Mammary epithelial cell (primary cell): ENCODE measurements at regions of chr7 and their contacts with region 1.

Region 1: GRCh38 chr7:8295638-8296361 is 33.8 kb upstream of the ICA1 start:
- DNase-seq: peak; percentile 70
- H3K4me3 ChIP-seq: no peak overlapping the region
- H3K27ac ChIP-seq: no peak overlapping the region
- H3K4me1 ChIP-seq: no peaks in the 10 kb centered on the region
- H3K27me3 ChIP-seq: no peaks in the 10 kb centered on the region
- CTCF ChIP-seq: peak; percentile 79 to 81

Region 2: DNA sequence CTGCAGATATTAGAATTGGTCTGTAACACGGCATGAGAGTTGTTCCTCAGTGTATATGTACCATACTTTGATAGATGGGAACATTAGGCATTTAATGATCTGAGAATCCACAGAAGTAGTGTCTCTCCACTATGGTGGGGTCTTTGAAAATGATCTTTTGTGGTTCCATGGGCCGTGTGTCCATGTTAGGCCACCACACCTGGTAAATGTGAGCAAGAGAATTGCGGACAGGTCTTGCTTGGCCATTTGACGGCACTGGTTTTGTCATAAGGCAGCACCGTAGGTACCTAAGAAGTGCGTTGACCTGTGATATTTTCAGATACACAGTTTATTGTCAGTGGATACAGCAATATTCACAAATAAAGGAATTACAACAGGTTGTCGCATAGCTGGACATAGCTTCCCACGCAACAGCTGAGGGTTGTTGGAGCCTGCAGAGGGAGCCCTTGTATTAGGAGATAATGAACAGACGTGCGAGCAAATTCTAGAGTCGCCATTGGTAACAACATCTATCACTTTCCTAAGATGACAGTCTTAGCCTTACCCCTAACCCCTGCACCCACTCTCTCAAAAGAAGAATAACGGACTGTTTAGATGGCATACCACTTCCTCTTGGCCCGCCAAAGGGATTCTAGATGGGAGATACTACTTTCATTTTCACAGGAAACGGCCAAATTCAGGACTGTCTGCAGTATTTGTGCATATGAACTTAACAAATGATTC is 871.5 kb before region 1 on chr7:
- CTCF ChIA-PET with region 1: no interaction called
- dilution Hi-C with region 1: no loop called
- in situ Hi-C with region 1: no loop called
- intact Hi-C with region 1: loop called (anchors 2 kb)
- DNase-seq: peak; percentile 51
- H3K4me3 ChIP-seq: peak overlapping the region; percentile 32 to 51 (median 45)
- H3K27ac ChIP-seq: no peak overlapping the region
- H3K4me1 ChIP-seq: no peaks in the 10 kb centered on the region
- H3K27me3 ChIP-seq: no peaks in the 10 kb centered on the region
- CTCF ChIP-seq: peak; percentile 88

Region 3: GRCh38 chr7:7932580-7932979 is 363.2 kb before region 1 on chr7:
- CTCF ChIA-PET with region 1: interaction called, 10 read pairs
- dilution Hi-C with region 1: no loop called
- in situ Hi-C with region 1: no loop called
- intact Hi-C with region 1: no loop called
- DNase-seq: no peak
- H3K4me3 ChIP-seq: no peak overlapping the region
- H3K27ac ChIP-seq: no peak overlapping the region
- H3K4me1 ChIP-seq: no peaks in the 10 kb centered on the region
- H3K27me3 ChIP-seq: no peaks in the 10 kb centered on the region
- CTCF ChIP-seq: no peak

Region 4: DNA sequence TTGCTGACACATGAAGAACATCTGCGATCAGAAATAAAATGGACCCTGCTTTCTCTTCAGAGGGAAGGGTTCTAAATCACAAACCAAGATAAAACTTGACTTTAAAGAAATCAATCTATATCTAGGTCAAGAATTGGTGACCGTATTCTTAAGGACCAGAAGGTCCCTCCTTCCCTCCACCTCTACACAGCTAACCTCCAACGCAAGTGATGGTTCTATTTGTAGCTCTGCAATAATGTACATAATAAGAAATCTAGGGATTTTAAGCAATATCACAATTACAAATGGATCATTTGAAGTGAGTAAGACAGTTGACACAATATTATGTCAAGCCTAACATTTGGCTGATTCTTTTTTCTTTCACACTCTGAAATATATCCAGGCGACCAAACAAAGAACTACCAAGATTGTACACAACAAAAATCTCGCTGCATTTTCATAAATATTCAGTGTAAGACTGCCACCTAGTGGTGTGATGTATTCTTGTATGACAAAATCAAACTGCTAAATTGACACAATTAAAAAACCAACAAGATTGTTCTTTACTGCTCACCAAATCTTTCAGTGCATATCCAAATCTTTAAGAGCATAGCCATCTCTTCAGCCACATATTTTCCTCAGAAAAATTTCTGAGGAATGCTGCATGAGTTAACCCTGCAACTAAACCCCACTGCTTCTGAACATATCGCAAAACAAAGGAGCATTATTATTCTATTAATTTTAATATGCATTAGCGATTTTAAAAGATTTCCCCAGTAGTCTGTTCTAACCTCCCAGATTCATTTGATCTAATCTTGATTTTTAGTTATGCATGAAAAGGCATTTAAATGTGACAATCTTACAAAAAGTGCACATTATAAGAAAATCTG is 78.4 kb before region 1 on chr7:
- CTCF ChIA-PET with region 1: no interaction called
- dilution Hi-C with region 1: no loop called
- in situ Hi-C with region 1: no loop called
- intact Hi-C with region 1: loop called (anchors 2 kb)
- DNase-seq: peak; percentile 36
- H3K4me3 ChIP-seq: no peak overlapping the region
- H3K27ac ChIP-seq: no peak overlapping the region
- H3K4me1 ChIP-seq: no peaks in the 10 kb centered on the region
- H3K27me3 ChIP-seq: no peaks in the 10 kb centered on the region
- CTCF ChIP-seq: peak; percentile 53

Region 5: GRCh38 chr7:8284606-8285005 is 11.2 kb before region 1 on chr7:
- CTCF ChIA-PET with region 1: no interaction called
- dilution Hi-C with region 1: no loop called
- in situ Hi-C with region 1: no loop called
- intact Hi-C with region 1: no loop called
- DNase-seq: no peak
- H3K4me3 ChIP-seq: no peak overlapping the region
- H3K27ac ChIP-seq: no peak overlapping the region
- H3K4me1 ChIP-seq: no peaks in the 10 kb centered on the region
- H3K27me3 ChIP-seq: peaks cover 2% of the 10 kb centered on the region
- CTCF ChIP-seq: no peak

Region 6: GRCh38 chr7:8320174-8320573 is 24.4 kb after region 1 on chr7:
- CTCF ChIA-PET with region 1: no interaction called
- dilution Hi-C with region 1: no loop called
- in situ Hi-C with region 1: no loop called
- intact Hi-C with region 1: no loop called
- DNase-seq: no peak
- H3K4me3 ChIP-seq: no peak overlapping the region
- H3K27ac ChIP-seq: no peak overlapping the region
- H3K4me1 ChIP-seq: no peaks in the 10 kb centered on the region
- H3K27me3 ChIP-seq: no peaks in the 10 kb centered on the region
- CTCF ChIP-seq: no peak

Region 7: GRCh38 chr7:8365503-8366110 is 69.8 kb after region 1 on chr7:
- CTCF ChIA-PET with region 1: interaction called, 3 read pairs
- dilution Hi-C with region 1: no loop called
- in situ Hi-C with region 1: no loop called
- intact Hi-C with region 1: loop called (anchors 1 kb)
- DNase-seq: peak; percentile 32
- H3K4me3 ChIP-seq: no peak overlapping the region
- H3K27ac ChIP-seq: no peak overlapping the region
- H3K4me1 ChIP-seq: no peaks in the 10 kb centered on the region
- H3K27me3 ChIP-seq: no peaks in the 10 kb centered on the region
- CTCF ChIP-seq: peak; percentile 29 to 45